Heart right ventricle (tissue), 16 donors: ENCODE measurements at regions of chr16 and their contacts with region 1.

Region 1: GRCh38 chr16:87778830-87779579 is 13.2 kb upstream of the KLHDC4 start:
- DNase-seq: peak; percentile 81 to 88
- ATAC-seq: peak; percentile 83 to 94 (median 91)
- H3K4me3 ChIP-seq: no peak overlapping the region
- H3K27ac ChIP-seq: peak overlapping the region in 1 of 10 donors; percentile 74
- H3K4me1 ChIP-seq: peaks cover 0 to 40% (median 14%) of the 10 kb centered on the region in 9 donors
- H3K27me3 ChIP-seq: peaks cover 0 to 8% (median 4%) of the 10 kb centered on the region in 7 donors
- CTCF ChIP-seq: peak; percentile 93 to 99 (median 97)

Region 2: GRCh38 chr16:87581833-87582203 is 197.2 kb before region 1 on chr16:
- intact Hi-C with region 1: loop called in 1 of 10 experiments (anchors 5 kb)
- DNase-seq: peak; percentile 64 to 78
- ATAC-seq: peak; percentile 85 to 93 (median 88)
- H3K4me3 ChIP-seq: peak overlapping the region in 4 of 10 donors; percentile 9 to 30 (median 24)
- H3K27ac ChIP-seq: peak overlapping the region; percentile 69 to 87 (median 80)
- H3K4me1 ChIP-seq: peaks cover 4 to 25% (median 18%) of the 10 kb centered on the region in 9 donors
- H3K27me3 ChIP-seq: peaks cover 0 to 52% (median 31%) of the 10 kb centered on the region in 7 donors
- CTCF ChIP-seq: no peak

Region 3: GRCh38 chr16:87877938-87878507 is 99.0 kb after region 1 on chr16:
- intact Hi-C with region 1: loop called in 2 of 10 experiments (anchors 2 to 5 kb)
- DNase-seq: no peak
- ATAC-seq: peak in 3 of 8 donors; percentile 10 to 35 (median 21)
- H3K4me3 ChIP-seq: no peak overlapping the region
- H3K27ac ChIP-seq: no peak overlapping the region
- H3K4me1 ChIP-seq: peaks cover 0 to 11% (median 0%) of the 10 kb centered on the region in 9 donors
- H3K27me3 ChIP-seq: peaks cover 0 to 32% (median 18%) of the 10 kb centered on the region in 7 donors
- CTCF ChIP-seq: peak in 4 of 9 donors; percentile 6 to 23 (median 18)

Region 4: GRCh38 chr16:87895641-87896141 is 116.7 kb after region 1 on chr16:
- intact Hi-C with region 1: loop called in 1 of 10 experiments (anchors 10 kb)
- DNase-seq: no peak
- ATAC-seq: peak in 2 of 8 donors; percentile 19 to 46
- H3K4me3 ChIP-seq: no peak overlapping the region
- H3K27ac ChIP-seq: peak overlapping the region in 1 of 10 donors; percentile 42
- H3K4me1 ChIP-seq: peaks cover 0 to 34% (median 0%) of the 10 kb centered on the region in 9 donors
- H3K27me3 ChIP-seq: peaks cover 0 to 4% (median 0%) of the 10 kb centered on the region in 7 donors
- CTCF ChIP-seq: no peak